ENCODE measurements at regions of chr17 and their contacts with region 1.

Region 1: DNA sequence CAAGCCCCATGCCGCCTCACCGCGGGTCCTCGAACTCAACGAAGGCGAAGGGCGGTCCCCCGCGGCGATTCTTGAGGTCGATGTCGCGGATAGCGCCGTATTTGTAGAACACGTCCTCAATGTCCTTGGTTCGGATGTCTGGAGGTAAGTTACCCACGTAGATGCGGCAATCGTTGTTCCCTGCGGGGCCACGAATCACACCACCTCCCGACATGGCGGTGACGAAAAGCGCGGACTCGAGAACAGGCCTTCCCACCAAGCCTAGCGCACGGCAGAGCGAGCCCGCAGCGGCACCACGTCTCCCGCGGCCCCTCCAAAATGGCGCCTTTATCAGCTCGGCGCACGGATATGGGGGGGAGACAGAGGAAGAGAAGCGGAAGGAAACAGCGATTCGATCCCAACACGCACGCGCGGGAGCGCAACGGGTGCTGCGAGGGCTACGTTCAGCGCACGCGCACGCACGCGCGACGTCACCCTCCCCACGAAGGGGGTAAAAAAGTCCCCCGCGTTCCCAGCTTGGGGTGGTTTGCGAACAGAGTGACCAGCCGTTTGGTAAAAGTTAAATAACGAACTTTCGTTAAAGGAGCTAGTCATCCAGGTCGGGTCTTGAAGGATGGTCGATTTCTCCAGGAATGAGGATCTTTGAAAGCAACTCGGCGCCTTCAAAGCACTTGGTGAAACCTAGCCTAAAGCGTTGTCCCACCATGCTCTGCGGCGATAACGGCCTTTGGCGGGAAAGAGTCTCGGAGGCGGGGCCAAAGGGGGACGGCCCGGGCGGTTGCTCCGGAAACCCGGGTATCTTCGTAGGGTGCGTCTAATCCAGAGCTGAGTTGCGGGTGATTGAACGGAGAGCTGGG is at the start of gene SRSF1:
- DNase-seq: peak; percentile 93

Region 2: DNA sequence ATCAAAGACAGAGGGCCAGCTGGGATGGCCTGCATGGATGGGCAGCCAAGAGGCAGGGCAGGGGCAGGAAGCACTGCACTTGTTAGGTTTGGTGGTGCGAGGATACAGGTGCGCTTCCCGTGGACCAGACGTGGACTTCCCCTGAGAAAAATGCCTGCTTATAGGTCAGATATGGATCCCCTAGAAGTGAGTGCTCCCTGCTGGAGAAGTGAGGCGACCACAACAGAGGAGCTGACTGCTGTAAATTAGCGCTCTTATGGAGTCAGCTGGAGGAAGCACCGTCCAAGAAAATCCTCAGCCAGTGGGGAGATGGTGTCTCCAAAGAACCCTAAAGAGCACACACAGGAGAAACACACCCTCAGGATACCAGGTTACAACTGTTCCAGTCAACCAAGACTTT is 234.4 kb before region 1 on chr17:
- CTCF ChIA-PET with region 1: no interaction called
- POLR2A ChIA-PET with region 1: no interaction called
- DNase-seq: no peak

Region 3: GRCh38 chr17:57849874-57850754 is 157.0 kb before region 1 on chr17 and contains the start of gene MRPS23:
- CTCF ChIA-PET with region 1: no interaction called
- POLR2A ChIA-PET with region 1: interaction called, 25 read pairs
- DNase-seq: peak; percentile 97

Region 4: GRCh38 chr17:57868007-57868909 is 138.9 kb before region 1 on chr17:
- CTCF ChIA-PET with region 1: no interaction called
- POLR2A ChIA-PET with region 1: interaction called, 27 read pairs
- DNase-seq: peak; percentile 48

Region 5: GRCh38 chr17:57987580-57988421 is 19.4 kb before region 1 on chr17 and contains the start of gene VEZF1:
- CTCF ChIA-PET with region 1: no interaction called
- POLR2A ChIA-PET with region 1: interaction called, 42 read pairs
- DNase-seq: peak; percentile 74

Region 6: DNA sequence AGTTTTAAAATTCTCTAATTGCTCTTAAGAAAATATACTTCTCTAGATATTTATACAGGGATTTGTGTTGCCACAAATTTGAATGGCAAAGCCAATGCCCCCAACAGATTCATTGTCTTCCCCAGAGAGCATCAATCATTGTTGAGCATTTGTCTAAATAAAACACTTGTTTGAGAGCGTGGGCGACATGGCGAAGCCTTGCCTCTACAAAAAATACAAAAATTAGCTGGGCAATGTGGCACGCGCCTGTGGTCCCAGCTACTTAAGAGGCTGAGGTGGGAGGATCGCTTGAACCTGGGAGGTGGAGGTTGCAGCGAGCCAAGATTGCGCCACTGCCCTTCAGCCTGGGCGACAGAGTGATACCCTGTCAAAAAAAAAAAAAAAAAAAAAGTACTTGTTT is 13.2 kb after region 1 on chr17:
- CTCF ChIA-PET with region 1: interaction called, 3 read pairs
- POLR2A ChIA-PET with region 1: interaction called, 53 read pairs
- DNase-seq: no peak

Region 7: DNA sequence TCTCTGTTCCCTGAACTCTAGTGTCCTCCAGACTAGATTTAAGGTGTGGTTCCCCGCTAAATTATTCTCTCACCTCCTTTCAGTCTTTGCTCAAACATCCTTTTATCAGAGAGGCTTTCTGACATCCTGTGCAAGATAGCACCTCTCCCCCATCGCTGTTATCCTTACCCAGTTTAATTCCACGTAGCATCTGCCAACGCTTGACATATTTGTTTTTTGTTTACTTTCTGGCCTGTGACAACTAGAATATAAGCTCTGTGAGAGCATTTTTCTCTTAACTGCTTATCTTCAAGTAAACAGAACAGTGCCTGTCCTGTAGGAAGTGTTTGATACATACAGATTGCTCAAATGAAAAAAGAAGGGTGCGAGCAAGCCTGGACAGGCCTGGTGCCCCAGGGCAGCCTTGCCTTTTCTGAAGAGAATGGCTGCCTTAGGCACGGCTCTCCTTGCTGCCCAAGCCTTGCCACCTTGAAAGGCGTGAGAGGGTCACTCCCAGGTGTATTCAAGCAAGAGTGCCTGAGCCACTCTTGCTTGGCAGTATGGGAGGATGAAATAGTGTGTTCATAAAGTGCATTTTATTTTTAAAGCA is 85.7 kb after region 1 on chr17:
- CTCF ChIA-PET with region 1: no interaction called
- POLR2A ChIA-PET with region 1: interaction called, 14 read pairs
- DNase-seq: no peak